Calu3 (cell line): ENCODE measurements at regions of chr17 and their contacts with region 1.

Region 1: GRCh38 chr17:46212634-46213435 is 19.6 kb upstream of the KANSL1 start:
- DNase-seq: peak; percentile 83
- H3K4me3 Mint-ChIP-seq: no peak overlapping the region
- H3K27ac Mint-ChIP-seq: peak overlapping the region; percentile 19
- H3K4me1 Mint-ChIP-seq: peaks cover 22% of the 10 kb centered on the region
- H3K27me3 Mint-ChIP-seq: no peaks in the 10 kb centered on the region
- CTCF ChIP-seq: peak; percentile 96

Region 2: GRCh38 chr17:45410144-45411091 is 802.4 kb before region 1 on chr17:
- CTCF ChIA-PET with region 1: no interaction called
- intact Hi-C with region 1: no loop called
- DNase-seq: no peak
- H3K4me3 Mint-ChIP-seq: no peak overlapping the region
- H3K27ac Mint-ChIP-seq: peak overlapping the region; percentile 20
- H3K4me1 Mint-ChIP-seq: peaks cover 79% of the 10 kb centered on the region
- H3K27me3 Mint-ChIP-seq: no peaks in the 10 kb centered on the region
- CTCF ChIP-seq: no peak

Region 3: DNA sequence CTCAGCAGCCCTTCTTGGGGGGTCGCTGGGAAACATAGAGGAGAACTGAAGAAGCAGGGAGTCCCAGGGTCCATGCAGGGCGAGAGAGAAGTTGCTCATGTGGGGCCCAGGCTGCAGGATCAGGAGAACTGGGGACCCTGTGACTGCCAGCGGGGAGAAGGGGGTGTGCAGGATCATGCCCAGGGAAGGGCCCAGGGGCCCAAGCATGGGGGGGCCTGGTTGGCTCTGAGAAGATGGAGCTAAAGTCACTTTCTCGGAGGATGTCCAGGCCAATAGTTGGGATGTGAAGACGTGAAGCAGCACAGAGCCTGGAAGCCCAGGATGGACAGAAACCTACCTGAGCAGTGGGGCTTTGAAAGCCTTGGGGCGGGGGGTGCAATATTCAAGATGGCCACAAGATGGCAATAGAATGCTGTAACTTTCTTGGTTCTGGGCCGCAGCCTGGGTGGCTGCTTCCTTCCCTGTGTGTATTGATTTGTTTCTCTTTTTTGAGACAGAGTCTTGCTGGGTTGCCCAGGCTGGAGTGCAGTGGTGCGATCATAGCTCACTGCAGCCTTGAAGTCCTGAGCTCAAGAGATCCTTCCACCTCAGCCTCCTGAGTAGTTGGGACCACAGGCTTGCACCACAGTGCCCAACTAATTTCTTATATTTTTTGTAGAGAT is 210.4 kb before region 1 on chr17:
- CTCF ChIA-PET with region 1: interaction called, 7 read pairs
- intact Hi-C with region 1: loop called (anchors 1 kb)
- DNase-seq: peak; percentile 87
- H3K4me3 Mint-ChIP-seq: no peak overlapping the region
- H3K27ac Mint-ChIP-seq: no peak overlapping the region
- H3K4me1 Mint-ChIP-seq: peaks cover 19% of the 10 kb centered on the region
- H3K27me3 Mint-ChIP-seq: peaks cover 14% of the 10 kb centered on the region
- CTCF ChIP-seq: peak; percentile 99

Region 4: DNA sequence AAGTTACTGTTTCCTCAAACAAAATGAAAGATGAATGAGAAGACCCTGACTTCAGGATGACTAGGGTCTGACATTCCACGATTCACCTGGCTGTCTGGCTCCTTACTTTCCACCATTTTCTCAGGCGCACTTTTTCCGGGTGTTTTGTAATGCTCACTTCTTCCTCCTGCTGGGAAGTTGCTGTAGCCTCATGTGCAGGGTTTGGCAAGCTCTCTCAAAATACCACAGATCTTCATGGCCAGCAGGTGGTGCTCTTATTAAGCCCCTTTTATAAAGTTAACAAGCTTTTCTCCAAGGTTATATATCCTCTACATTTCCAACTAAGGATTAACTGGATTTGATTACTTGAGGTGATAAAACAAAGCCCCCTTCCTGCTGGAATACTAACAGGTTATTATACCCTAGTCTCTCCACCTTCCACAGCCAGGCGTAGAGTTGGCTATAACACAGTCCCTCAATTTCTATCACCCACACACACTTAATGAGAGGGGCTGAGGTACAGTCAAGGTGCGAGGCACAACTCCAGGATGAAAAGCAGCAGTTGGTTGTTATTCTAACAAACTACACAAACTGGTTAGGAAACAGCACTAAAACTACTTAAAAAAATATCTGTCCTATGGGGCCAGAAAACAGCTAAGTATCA is 168.4 kb before region 1 on chr17:
- CTCF ChIA-PET with region 1: interaction called, 41 read pairs
- intact Hi-C with region 1: loop called (anchors 1 kb)
- DNase-seq: peak; percentile 83
- H3K4me3 Mint-ChIP-seq: no peak overlapping the region
- H3K27ac Mint-ChIP-seq: peak overlapping the region; percentile 11
- H3K4me1 Mint-ChIP-seq: peaks cover 17% of the 10 kb centered on the region
- H3K27me3 Mint-ChIP-seq: no peaks in the 10 kb centered on the region
- CTCF ChIP-seq: peak; percentile 93

Region 5: GRCh38 chr17:46199379-46199778 is 13.5 kb before region 1 on chr17:
- CTCF ChIA-PET with region 1: interaction called, 105 read pairs
- intact Hi-C with region 1: loop called (anchors 1 kb)
- DNase-seq: no peak
- H3K4me3 Mint-ChIP-seq: peak overlapping the region; percentile 8
- H3K27ac Mint-ChIP-seq: peak overlapping the region; percentile 32
- H3K4me1 Mint-ChIP-seq: peaks cover 77% of the 10 kb centered on the region
- H3K27me3 Mint-ChIP-seq: no peaks in the 10 kb centered on the region
- CTCF ChIP-seq: no peak

Region 6: GRCh38 chr17:46962374-46962790 is 749.5 kb after region 1 on chr17:
- CTCF ChIA-PET with region 1: no interaction called
- intact Hi-C with region 1: no loop called
- DNase-seq: no peak
- H3K4me3 Mint-ChIP-seq: no peak overlapping the region
- H3K27ac Mint-ChIP-seq: no peak overlapping the region
- H3K4me1 Mint-ChIP-seq: peaks cover 8% of the 10 kb centered on the region
- H3K27me3 Mint-ChIP-seq: peaks cover 19% of the 10 kb centered on the region
- CTCF ChIP-seq: no peak